H1 (cell line): ENCODE measurements at regions of chr15 and their contacts with region 1.

Region 1: DNA sequence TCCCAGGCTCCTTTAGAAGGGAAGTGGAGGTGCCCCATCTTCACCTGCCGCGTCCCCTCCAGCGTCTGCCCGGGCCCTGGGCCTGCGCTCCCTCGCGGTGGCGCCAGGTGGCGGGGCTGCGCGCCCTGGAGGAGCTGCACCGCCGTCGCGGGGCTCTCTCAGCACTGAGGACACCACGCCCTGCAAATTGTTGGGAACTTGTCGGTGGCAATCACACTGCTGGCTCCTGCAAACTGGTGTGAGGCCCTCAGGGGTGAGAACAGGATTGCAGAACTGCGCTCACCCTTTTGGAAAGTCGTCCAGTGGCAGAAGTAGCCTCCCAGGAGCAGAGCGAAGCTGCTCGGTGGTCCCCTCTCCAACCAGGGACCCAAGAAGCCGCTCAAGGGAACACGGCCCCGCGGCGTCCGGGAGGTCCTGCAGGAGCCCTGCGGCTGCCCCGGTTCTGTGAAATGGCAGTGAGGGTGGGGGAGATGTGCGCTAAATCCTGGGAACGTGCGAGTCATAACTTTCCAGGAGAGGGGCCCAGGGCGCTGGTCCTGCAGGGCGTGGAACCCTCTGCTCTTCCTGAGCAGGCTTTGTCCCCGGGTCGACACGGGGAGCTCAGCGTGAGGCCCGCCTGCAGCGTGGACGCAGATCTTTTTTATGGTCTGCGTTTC is 995 bp upstream of the LRRK1 start:
- DNase-seq: peak in 1 of 2 experiments; percentile 94
- H3K4me3 ChIP-seq: peak overlapping the region; percentile 42 to 68 (median 48)
- H3K27ac ChIP-seq: no peak overlapping the region
- H3K4me1 ChIP-seq: peaks cover 0 to 6% (median 1%) of the 10 kb centered on the region in 4 experiments; a peak in 4 of 7 replicates
- H3K27me3 ChIP-seq: peaks cover 31 to 59% (median 48%) of the 10 kb centered on the region in 4 experiments
- CTCF ChIP-seq: peak; percentile 88 to 97 (median 93)
- EP300 ChIP-seq: peak in 1 of 2 experiments; percentile 52; a peak in 1 of 3 replicates
- POLR2A ChIP-seq: no peak
- RAD21 ChIP-seq: peak; percentile 84 to 86

Region 2: DNA sequence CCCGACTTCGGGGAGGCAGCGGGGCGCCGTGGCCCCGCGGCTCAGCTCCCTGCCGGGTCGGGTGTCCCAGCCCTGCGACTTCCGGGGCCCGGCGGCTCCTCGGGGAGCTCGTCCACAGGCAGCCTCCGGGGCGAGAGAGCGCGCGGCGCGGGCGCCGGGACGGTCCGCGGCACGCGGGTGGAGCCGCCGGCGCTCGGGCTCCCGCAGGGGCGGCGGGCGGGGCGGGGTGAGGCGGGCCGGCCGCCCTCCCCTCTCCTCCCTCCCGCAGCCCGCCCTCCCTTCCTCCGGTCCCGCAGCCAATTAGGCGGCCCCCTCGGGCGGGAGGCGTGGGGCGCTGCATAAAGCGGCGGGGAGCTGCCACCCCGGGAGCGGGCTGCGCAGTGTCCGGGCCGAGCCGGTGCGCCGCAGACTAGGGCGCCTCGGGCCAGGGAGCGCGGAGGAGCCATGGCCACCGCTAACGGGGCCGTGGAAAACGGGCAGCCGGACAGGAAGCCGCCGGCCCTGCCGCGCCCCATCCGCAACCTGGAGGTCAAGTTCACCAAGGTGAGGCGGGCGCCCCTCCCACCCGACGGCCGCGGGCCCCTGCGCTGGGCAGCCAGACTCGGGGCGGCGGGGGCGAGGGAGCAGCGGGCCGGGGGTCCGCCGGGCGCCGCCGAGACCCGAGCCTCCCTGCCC is 38.6 kb before region 1 on chr15 and contains the start of gene ALDH1A3:
- CTCF ChIA-PET with region 1: interaction called, 34 read pairs
- POLR2A ChIA-PET with region 1: no interaction called
- DNase-seq: no peak
- H3K4me3 ChIP-seq: peak within 1 kb of the TSS; percentile 37 to 59 (median 46)
- H3K27ac ChIP-seq: no peak within 1 kb of the TSS
- H3K4me1 ChIP-seq: peaks cover 0 to 13% (median 8%) of the 10 kb centered on the region in 4 experiments; a peak in 5 of 7 replicates
- H3K27me3 ChIP-seq: peaks cover 16 to 52% (median 48%) of the 10 kb centered on the region in 4 experiments
- CTCF ChIP-seq: no peak
- EP300 ChIP-seq: no peak
- POLR2A ChIP-seq: no peak
- RAD21 ChIP-seq: no peak
- total RNA-seq, gene ALDH1A3: 5.5 and 5.7 TPM in 2 replicates

Region 3: GRCh38 chr15:100889385-100890050 is 28.6 kb before region 1 on chr15:
- CTCF ChIA-PET with region 1: interaction called, 26 read pairs
- POLR2A ChIA-PET with region 1: no interaction called
- DNase-seq: no peak
- H3K4me3 ChIP-seq: no peak overlapping the region
- H3K27ac ChIP-seq: no peak overlapping the region
- H3K4me1 ChIP-seq: peaks cover 0 to 7% (median 2%) of the 10 kb centered on the region in 4 experiments; a peak in 2 of 7 replicates
- H3K27me3 ChIP-seq: no peaks in the 10 kb centered on the region; a peak in 1 of 7 replicates
- CTCF ChIP-seq: no peak
- EP300 ChIP-seq: no peak
- POLR2A ChIP-seq: no peak
- RAD21 ChIP-seq: no peak

Region 4: DNA sequence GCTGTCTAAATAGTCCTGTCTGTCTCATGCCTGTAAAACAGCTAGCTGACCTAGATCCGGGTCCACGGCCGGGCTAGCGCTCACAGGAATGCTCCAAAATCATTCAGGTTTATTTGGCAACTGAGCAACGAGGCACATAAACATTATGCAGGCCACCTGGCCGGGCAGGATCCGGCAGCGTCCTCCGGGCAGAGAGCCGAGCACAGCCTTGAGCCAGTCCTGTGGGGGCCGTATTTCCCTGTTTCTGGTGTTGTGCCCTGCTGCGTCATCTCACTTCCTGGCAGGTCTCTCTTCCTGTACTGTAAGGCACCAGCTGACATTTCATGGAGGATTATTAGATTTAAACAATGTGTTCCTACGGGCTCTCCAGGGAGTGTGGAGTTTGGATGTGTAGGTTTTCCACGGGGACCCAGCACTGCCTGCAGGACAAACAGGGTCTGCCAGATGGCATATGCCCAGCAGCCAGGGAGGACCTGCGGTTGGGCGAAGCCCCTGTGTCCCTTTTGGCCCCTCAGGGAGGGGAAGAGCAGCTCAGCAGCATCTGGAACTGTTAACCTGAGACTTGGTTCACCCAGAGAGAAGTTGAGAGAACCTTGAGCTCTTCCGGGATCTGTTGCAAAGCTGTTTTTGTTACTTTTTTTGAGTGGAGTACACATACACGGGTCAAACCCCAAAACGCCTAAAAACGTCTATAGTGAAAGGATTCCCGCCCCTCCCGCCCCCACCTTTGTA is 15.6 kb before region 1 on chr15:
- CTCF ChIA-PET with region 1: interaction called, 150 read pairs
- POLR2A ChIA-PET with region 1: no interaction called
- DNase-seq: no peak
- H3K4me3 ChIP-seq: no peak overlapping the region
- H3K27ac ChIP-seq: no peak overlapping the region
- H3K4me1 ChIP-seq: peaks cover 0 to 10% (median 3%) of the 10 kb centered on the region in 4 experiments; a peak in 5 of 7 replicates
- H3K27me3 ChIP-seq: no peaks in the 10 kb centered on the region
- CTCF ChIP-seq: no peak
- EP300 ChIP-seq: no peak
- POLR2A ChIP-seq: no peak
- RAD21 ChIP-seq: no peak

Region 5: DNA sequence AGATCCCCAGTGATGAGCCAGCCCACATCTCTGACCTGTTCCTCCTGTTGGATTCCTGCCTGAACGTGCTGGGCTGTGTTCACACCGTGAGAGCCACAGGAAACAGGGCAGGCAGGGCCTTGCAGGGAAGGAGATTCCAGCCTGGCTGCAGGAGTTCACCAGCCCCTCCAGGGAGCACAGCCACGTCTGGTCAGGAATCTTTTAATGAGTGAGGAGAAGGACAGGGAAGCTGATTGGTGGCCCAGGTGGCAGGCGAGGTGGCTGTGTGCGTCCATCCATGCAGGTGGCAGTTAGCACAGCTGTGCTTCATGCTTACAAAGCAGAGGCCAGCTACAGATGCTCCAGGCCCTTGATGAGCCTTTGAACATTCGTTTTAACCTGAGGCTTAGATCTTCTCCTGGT is 11.5 kb after region 1 on chr15:
- CTCF ChIA-PET with region 1: interaction called, 81 read pairs
- POLR2A ChIA-PET with region 1: interaction called, 3 read pairs
- DNase-seq: no peak
- H3K4me3 ChIP-seq: no peak overlapping the region
- H3K27ac ChIP-seq: no peak overlapping the region
- H3K4me1 ChIP-seq: peaks cover 0 to 12% (median 6%) of the 10 kb centered on the region in 4 experiments; a peak in 5 of 7 replicates
- H3K27me3 ChIP-seq: peaks cover 0 to 1% (median 0%) of the 10 kb centered on the region in 4 experiments; a peak in 1 of 7 replicates
- CTCF ChIP-seq: no peak
- EP300 ChIP-seq: no peak
- POLR2A ChIP-seq: no peak
- RAD21 ChIP-seq: no peak

Region 6: GRCh38 chr15:100934726-100935125 is 16.6 kb after region 1 on chr15:
- CTCF ChIA-PET with region 1: interaction called, 81 read pairs
- POLR2A ChIA-PET with region 1: interaction called, 3 read pairs
- DNase-seq: peak in 1 of 2 experiments; percentile 41
- H3K4me3 ChIP-seq: no peak overlapping the region
- H3K27ac ChIP-seq: no peak overlapping the region
- H3K4me1 ChIP-seq: peaks cover 0 to 5% (median 3%) of the 10 kb centered on the region in 4 experiments; a peak in 4 of 7 replicates
- H3K27me3 ChIP-seq: no peaks in the 10 kb centered on the region
- CTCF ChIP-seq: peak in 2 of 3 experiments; percentile 33 to 38; a peak in 3 of 4 replicates
- EP300 ChIP-seq: no peak
- POLR2A ChIP-seq: no peak
- RAD21 ChIP-seq: peak; percentile 19 to 38; a peak in 3 of 4 replicates

Region 7: DNA sequence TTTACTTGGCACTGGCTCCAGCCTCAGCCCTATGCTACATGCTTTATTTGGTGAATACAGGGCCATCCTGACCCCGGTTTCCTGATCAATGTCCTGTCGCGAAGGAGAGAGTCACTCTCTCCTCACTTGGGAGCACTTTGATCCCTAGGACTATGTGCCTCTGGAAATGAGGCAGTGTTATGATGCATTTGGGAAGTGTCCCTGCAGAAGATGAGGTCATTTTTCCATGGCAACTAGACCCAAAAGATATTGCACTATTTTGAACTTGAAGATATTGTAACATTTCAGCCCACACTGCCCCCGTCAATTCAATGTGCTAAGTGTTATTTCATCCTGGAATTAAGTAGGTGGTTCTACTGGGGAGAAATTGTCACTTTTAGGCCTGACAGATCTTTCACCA is 69.0 kb after region 1 on chr15:
- CTCF ChIA-PET with region 1: interaction called, 43 read pairs
- POLR2A ChIA-PET with region 1: no interaction called
- DNase-seq: no peak
- H3K4me3 ChIP-seq: no peak overlapping the region
- H3K27ac ChIP-seq: no peak overlapping the region
- H3K4me1 ChIP-seq: peaks cover 0 to 2% (median 0%) of the 10 kb centered on the region in 4 experiments; a peak in 1 of 7 replicates
- H3K27me3 ChIP-seq: no peaks in the 10 kb centered on the region; a peak in 1 of 7 replicates
- CTCF ChIP-seq: no peak
- EP300 ChIP-seq: no peak
- POLR2A ChIP-seq: no peak
- RAD21 ChIP-seq: no peak